ENCODE measurements at regions of chr11 and their contacts with region 1.

Region 1: DNA sequence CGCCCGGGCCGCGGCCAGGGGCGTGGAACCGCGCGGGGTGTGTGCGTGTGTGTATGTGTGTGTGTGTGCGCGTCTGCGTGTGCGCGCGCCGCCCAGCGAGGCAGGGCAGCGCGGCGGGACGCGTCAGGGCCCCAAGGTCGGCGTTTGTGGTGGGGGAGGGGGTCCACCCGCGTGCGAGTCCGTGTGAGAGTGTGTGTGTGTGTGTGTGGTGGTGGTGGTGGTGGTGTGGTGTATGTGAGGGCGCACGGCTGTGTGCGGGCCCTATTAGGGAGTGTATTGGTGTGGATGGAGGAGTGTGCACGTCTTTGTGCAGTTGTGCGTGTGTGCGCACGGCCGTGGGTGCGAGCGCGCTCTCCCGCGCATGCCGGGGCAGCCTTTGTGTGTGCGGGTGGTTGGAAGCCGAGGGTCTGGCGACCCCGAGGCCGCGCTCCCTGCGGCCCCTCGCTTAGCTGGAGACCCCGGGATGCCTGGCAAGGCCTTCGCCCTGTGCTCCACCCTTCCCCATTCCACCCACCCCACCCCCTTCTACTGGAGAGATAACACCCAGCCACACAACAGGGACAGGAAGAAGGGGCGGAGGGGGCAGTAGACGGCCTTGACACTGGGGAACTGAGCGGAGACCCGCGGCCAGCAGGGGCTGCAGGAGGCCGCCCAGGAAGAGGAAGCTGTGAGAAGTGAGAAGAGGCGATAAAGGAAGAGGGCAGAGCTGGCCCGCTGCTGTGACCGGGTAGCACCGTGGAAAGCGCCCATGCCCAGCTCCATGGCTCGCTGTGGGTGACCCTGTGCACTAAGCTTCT is 528 bp upstream of the ARRB1 start:
- DNase-seq: peak; percentile 87 to 89
- H3K4me3 ChIP-seq: peak overlapping the region; percentile 56
- H3K4me3 Mint-ChIP-seq: peak overlapping the region; percentile 99
- H3K27ac Mint-ChIP-seq: peak overlapping the region; percentile 98
- H3K4me1 ChIP-seq: peaks cover 49% of the 10 kb centered on the region
- H3K4me1 Mint-ChIP-seq: peaks cover 47% of the 10 kb centered on the region
- H3K27me3 ChIP-seq: no peaks in the 10 kb centered on the region
- H3K27me3 Mint-ChIP-seq: no peaks in the 10 kb centered on the region
- CTCF ChIP-seq: peak; percentile 60 to 82

Region 2: GRCh38 chr11:75273396-75274391 is 78.3 kb before region 1 on chr11:
- CTCF ChIA-PET with region 1: no interaction called
- POLR2A ChIA-PET with region 1: no interaction called
- intact Hi-C with region 1: no loop called
- DNase-seq: peak in 1 of 2 experiments; percentile 41
- H3K4me3 ChIP-seq: no peak overlapping the region
- H3K4me3 Mint-ChIP-seq: no peak overlapping the region
- H3K27ac Mint-ChIP-seq: no peak overlapping the region
- H3K4me1 ChIP-seq: peaks cover 2% of the 10 kb centered on the region
- H3K4me1 Mint-ChIP-seq: peaks cover 8% of the 10 kb centered on the region
- H3K27me3 ChIP-seq: no peaks in the 10 kb centered on the region
- H3K27me3 Mint-ChIP-seq: no peaks in the 10 kb centered on the region
- CTCF ChIP-seq: no peak

Region 3: GRCh38 chr11:75328426-75329277 is 23.3 kb before region 1 on chr11:
- CTCF ChIA-PET with region 1: no interaction called
- POLR2A ChIA-PET with region 1: interaction called, 3 read pairs
- intact Hi-C with region 1: loop called (anchors 2 kb)
- DNase-seq: peak; percentile 91 to 92
- H3K4me3 ChIP-seq: no peak overlapping the region
- H3K4me3 Mint-ChIP-seq: no peak overlapping the region
- H3K27ac Mint-ChIP-seq: peak overlapping the region; percentile 8
- H3K4me1 ChIP-seq: peaks cover 41% of the 10 kb centered on the region
- H3K4me1 Mint-ChIP-seq: peaks cover 64% of the 10 kb centered on the region
- H3K27me3 ChIP-seq: no peaks in the 10 kb centered on the region
- H3K27me3 Mint-ChIP-seq: no peaks in the 10 kb centered on the region
- CTCF ChIP-seq: peak; percentile 90 to 98

Region 4: DNA sequence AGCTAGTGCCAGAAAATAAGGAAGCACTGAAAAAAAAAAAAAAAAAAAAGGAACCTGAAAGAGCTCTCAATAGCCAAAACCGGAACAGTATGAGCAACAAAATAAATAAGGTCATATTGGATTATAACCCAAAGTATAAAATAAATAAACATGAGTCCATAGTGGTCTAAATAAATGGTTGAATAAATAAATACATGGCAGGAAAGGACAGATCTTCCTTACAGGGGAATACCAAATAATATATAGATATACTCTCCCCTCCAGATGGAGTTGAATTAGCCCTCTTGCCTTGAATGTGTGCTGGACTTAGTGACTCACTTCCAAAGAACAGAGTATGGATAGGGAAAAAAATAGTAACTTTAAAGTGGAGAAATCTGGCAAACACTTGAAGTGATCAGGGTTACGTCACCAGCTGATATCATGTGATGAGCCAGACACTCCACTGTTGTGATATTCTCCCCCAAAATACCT is 13.8 kb after region 1 on chr11:
- CTCF ChIA-PET with region 1: interaction called, 14 read pairs
- POLR2A ChIA-PET with region 1: interaction called, 14 read pairs
- intact Hi-C with region 1: no loop called
- DNase-seq: no peak
- H3K4me3 ChIP-seq: no peak overlapping the region
- H3K4me3 Mint-ChIP-seq: peak overlapping the region; percentile 28
- H3K27ac Mint-ChIP-seq: peak overlapping the region; percentile 79
- H3K4me1 ChIP-seq: peaks cover 31% of the 10 kb centered on the region
- H3K4me1 Mint-ChIP-seq: peaks cover 20% of the 10 kb centered on the region
- H3K27me3 ChIP-seq: no peaks in the 10 kb centered on the region
- H3K27me3 Mint-ChIP-seq: no peaks in the 10 kb centered on the region
- CTCF ChIP-seq: no peak

Region 5: GRCh38 chr11:75371941-75372789 is 20.2 kb after region 1 on chr11:
- CTCF ChIA-PET with region 1: interaction called, 19 read pairs
- POLR2A ChIA-PET with region 1: interaction called, 14 read pairs
- intact Hi-C with region 1: loop called (anchors 1 kb)
- DNase-seq: peak; percentile 74 to 78
- H3K4me3 ChIP-seq: no peak overlapping the region
- H3K4me3 Mint-ChIP-seq: peak overlapping the region; percentile 53
- H3K27ac Mint-ChIP-seq: peak overlapping the region; percentile 79
- H3K4me1 ChIP-seq: peaks cover 69% of the 10 kb centered on the region
- H3K4me1 Mint-ChIP-seq: peaks cover 58% of the 10 kb centered on the region
- H3K27me3 ChIP-seq: no peaks in the 10 kb centered on the region
- H3K27me3 Mint-ChIP-seq: no peaks in the 10 kb centered on the region
- CTCF ChIP-seq: no peak

Region 6: GRCh38 chr11:75380711-75381420 is 28.9 kb after region 1 on chr11:
- CTCF ChIA-PET with region 1: interaction called, 35 read pairs
- POLR2A ChIA-PET with region 1: interaction called, 16 read pairs
- intact Hi-C with region 1: loop called (anchors 1 kb)
- DNase-seq: peak; percentile 85 to 90
- H3K4me3 ChIP-seq: no peak overlapping the region
- H3K4me3 Mint-ChIP-seq: peak overlapping the region; percentile 66
- H3K27ac Mint-ChIP-seq: peak overlapping the region; percentile 97
- H3K4me1 ChIP-seq: peaks cover 57% of the 10 kb centered on the region
- H3K4me1 Mint-ChIP-seq: peaks cover 39% of the 10 kb centered on the region
- H3K27me3 ChIP-seq: no peaks in the 10 kb centered on the region
- H3K27me3 Mint-ChIP-seq: no peaks in the 10 kb centered on the region
- CTCF ChIP-seq: no peak

Region 7: GRCh38 chr11:75406338-75406777 is 54.4 kb after region 1 on chr11:
- CTCF ChIA-PET with region 1: no interaction called
- POLR2A ChIA-PET with region 1: no interaction called
- intact Hi-C with region 1: no loop called
- DNase-seq: no peak
- H3K4me3 ChIP-seq: no peak overlapping the region
- H3K4me3 Mint-ChIP-seq: no peak overlapping the region
- H3K27ac Mint-ChIP-seq: no peak overlapping the region
- H3K4me1 ChIP-seq: peaks cover 24% of the 10 kb centered on the region
- H3K4me1 Mint-ChIP-seq: peaks cover 42% of the 10 kb centered on the region
- H3K27me3 ChIP-seq: no peaks in the 10 kb centered on the region
- H3K27me3 Mint-ChIP-seq: no peaks in the 10 kb centered on the region
- CTCF ChIP-seq: no peak

Region 8: GRCh38 chr11:75667831-75668450 is 316.0 kb after region 1 on chr11:
- CTCF ChIA-PET with region 1: no interaction called
- POLR2A ChIA-PET with region 1: no interaction called
- intact Hi-C with region 1: no loop called
- DNase-seq: peak; percentile 85 to 90
- H3K4me3 ChIP-seq: peak overlapping the region; percentile 69
- H3K4me3 Mint-ChIP-seq: peak overlapping the region; percentile 82
- H3K27ac Mint-ChIP-seq: peak overlapping the region; percentile 68
- H3K4me1 ChIP-seq: peaks cover 42% of the 10 kb centered on the region
- H3K4me1 Mint-ChIP-seq: peaks cover 33% of the 10 kb centered on the region
- H3K27me3 ChIP-seq: no peaks in the 10 kb centered on the region
- H3K27me3 Mint-ChIP-seq: no peaks in the 10 kb centered on the region
- CTCF ChIP-seq: no peak